AG04449 (cell line): ENCODE measurements at regions of chr3 and their contacts with region 1.

Region 1: DNA sequence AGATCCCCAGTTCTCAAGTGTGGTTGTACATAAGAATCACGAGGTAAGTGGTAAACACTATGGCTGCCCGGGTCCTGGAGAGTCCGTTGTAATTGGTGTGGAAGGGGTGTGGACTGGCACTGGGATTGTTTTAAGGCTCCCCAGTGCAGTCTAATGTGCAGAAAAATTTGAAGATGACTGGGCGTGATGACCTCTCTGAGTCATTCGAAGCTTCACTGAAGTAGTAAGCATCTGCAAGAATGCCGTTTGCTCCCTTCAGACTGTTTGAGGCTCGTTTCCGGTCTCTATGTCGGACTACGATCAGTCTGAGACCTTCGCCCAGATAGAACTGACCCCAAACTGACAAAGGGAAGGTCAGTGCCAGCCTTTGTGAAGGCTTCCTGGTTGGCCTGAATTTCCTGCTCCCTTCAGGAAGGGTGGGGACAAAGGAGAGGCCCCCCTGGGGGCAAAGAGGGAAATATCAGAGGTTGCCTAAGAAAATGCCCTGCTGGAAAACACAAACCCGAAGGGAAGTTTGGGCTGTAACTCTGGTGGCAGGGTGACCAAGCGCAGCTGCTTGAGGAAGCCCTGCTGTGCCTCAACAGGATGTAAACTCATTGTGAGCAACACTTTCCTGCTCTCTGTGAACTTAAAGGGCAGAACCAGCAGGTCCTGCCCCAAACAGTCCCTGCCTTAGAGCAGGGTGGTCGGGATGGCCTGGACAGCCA is 34.6 kb downstream of the BTD start:
- DNase-seq: peak; percentile 88
- H3K4me3 ChIP-seq: peak overlapping the region; percentile 19
- CTCF ChIP-seq: no peak

Region 2: DNA sequence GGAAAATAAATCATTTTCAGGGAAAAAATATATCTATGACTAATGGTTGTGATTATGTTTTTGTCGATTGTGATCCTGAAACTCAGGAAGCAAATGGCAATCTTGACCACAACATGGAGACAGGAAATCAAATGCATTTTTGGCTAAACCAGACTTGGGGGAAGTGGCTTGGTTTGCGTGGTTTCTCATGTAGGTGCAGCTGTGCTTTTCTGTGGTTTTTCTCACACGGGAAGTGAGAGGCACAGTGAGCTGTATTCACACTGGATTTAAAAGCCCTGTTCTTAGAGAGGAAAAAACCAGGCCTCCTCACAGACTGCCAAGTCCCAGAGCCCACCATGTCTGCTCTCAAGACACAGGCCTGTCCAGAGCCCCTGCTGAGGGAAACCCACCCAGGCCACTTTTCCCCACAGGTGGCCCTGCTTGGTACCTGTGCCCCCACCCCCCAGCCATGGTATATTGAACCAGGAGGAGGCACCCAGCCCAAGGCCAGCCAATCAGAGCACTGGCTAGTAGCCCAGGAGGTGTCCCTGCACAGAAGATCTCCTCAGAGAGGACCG is 11.5 kb after region 1 on chr3:
- CTCF ChIA-PET with region 1: interaction called, 22 read pairs
- POLR2A ChIA-PET with region 1: interaction called, 29 read pairs
- DNase-seq: peak; percentile 97
- H3K4me3 ChIP-seq: peak overlapping the region; percentile 9
- CTCF ChIP-seq: no peak